ENCODE measurements at regions of chr21 and their contacts with region 1.

Region 1: GRCh38 chr21:41612674-41613532 is 104.9 kb upstream of the TMPRSS2 start:
- DNase-seq: peak; percentile 41
- H3K4me3 ChIP-seq: no peak overlapping the region
- H3K27ac ChIP-seq: no peak overlapping the region
- H3K4me1 ChIP-seq: peaks cover 8% of the 10 kb centered on the region
- CTCF ChIP-seq: peak; percentile 77

Region 2: DNA sequence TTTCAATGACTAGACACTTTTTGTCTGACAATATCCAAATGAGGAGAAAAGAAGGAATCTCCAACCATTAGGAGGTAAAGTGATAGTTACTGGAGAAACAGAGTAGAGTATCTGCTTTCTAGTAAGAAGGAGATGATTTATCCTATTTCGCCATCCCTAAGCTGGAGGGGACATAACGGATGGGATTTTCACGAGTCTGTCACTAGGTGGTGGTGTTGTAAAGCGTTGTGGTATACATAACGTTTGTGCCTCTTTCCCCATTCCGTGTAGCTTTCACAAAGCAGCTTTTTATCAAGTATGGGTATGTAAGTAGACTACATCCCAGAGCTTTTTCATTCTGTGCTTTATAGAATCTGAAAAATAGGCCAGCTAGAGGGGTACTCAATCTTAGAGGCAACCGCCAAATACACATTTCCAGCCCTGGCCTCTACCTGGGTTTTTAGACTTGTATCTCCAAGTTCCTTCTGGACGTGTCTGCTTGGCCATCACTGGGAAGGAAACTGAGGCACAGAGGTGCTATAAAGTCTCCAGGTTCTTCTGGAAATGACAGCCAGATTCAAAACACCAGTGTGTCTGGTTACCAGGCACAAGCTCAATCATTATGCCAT is 329.6 kb before region 1 on chr21:
- CTCF ChIA-PET with region 1: interaction called, 4 read pairs
- POLR2A ChIA-PET with region 1: no interaction called
- intact Hi-C with region 1: loop called (anchors 1 kb)
- DNase-seq: peak; percentile 85
- H3K4me3 ChIP-seq: no peak overlapping the region
- H3K27ac ChIP-seq: no peak overlapping the region
- H3K4me1 ChIP-seq: peaks cover 8% of the 10 kb centered on the region
- CTCF ChIP-seq: peak; percentile 90

Region 3: DNA sequence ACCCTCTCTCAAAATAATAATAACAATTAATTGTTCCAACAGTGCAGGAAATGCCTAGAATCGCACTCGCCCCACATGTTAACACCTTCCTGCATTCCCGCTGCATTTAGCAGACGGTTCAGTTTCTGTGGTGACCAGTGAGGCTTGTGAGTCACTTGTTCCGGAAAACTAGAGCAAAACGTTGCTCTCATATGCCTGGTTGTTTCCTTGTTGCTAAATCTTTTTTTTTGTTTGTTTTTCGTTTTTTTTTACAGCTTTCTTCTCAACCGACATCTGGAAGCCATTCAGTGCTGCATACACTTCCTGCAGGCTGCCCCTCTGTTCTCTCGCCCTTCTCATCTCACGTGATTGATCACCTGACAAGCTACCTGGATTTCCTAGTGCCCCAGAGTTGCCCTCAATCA is 48.0 kb before region 1 on chr21:
- CTCF ChIA-PET with region 1: no interaction called
- POLR2A ChIA-PET with region 1: no interaction called
- intact Hi-C with region 1: no loop called
- DNase-seq: no peak
- H3K4me3 ChIP-seq: no peak overlapping the region
- H3K27ac ChIP-seq: no peak overlapping the region
- H3K4me1 ChIP-seq: no peaks in the 10 kb centered on the region
- CTCF ChIP-seq: no peak

Region 4: GRCh38 chr21:41777951-41778874 is 165.3 kb after region 1 on chr21:
- CTCF ChIA-PET with region 1: no interaction called
- POLR2A ChIA-PET with region 1: no interaction called
- intact Hi-C with region 1: loop called (anchors 1 kb)
- DNase-seq: peak; percentile 28
- H3K4me3 ChIP-seq: no peak overlapping the region
- H3K27ac ChIP-seq: no peak overlapping the region
- H3K4me1 ChIP-seq: no peaks in the 10 kb centered on the region
- CTCF ChIP-seq: peak; percentile 71

Region 5: GRCh38 chr21:41816220-41817165 is 203.6 kb after region 1 on chr21:
- CTCF ChIA-PET with region 1: no interaction called
- POLR2A ChIA-PET with region 1: no interaction called
- intact Hi-C with region 1: loop called (anchors 1 kb)
- DNase-seq: peak; percentile 82
- H3K4me3 ChIP-seq: no peak overlapping the region
- H3K27ac ChIP-seq: peak overlapping the region; percentile 38
- H3K4me1 ChIP-seq: peaks cover 11% of the 10 kb centered on the region
- CTCF ChIP-seq: peak; percentile 86

Region 6: DNA sequence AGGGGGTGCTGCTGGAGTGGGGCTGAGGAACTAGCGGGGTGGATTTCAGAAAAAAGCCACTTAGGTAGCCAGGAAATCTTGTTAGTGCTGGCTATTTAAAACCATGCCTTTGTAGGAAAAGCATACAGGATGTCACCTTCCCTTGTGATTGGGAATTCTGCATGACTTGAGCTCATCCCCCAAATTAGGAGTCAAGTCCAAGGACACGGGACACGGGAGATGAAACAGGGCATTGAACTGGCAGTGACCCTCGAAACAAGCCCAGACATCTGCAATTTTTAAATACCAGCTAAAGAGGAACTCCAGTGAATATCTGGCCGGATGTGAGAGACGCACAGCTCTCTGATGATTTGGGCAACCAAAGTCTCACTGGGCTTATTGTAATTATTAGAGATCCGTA is 308.1 kb after region 1 on chr21:
- CTCF ChIA-PET with region 1: no interaction called
- POLR2A ChIA-PET with region 1: interaction called, 3 read pairs
- intact Hi-C with region 1: loop called (anchors 1 kb)
- DNase-seq: peak; percentile 77
- H3K4me3 ChIP-seq: no peak overlapping the region
- H3K27ac ChIP-seq: peak overlapping the region; percentile 74
- H3K4me1 ChIP-seq: peaks cover 54% of the 10 kb centered on the region
- CTCF ChIP-seq: no peak

Region 7: GRCh38 chr21:41966041-41966684 is 353.3 kb after region 1 on chr21:
- CTCF ChIA-PET with region 1: interaction called, 4 read pairs
- POLR2A ChIA-PET with region 1: no interaction called
- intact Hi-C with region 1: loop called (anchors 10 kb)
- DNase-seq: no peak
- H3K4me3 ChIP-seq: no peak overlapping the region
- H3K27ac ChIP-seq: no peak overlapping the region
- H3K4me1 ChIP-seq: peaks cover 27% of the 10 kb centered on the region
- CTCF ChIP-seq: no peak

Region 8: GRCh38 chr21:42117229-42117966 is 504.5 kb after region 1 on chr21:
- CTCF ChIA-PET with region 1: no interaction called
- POLR2A ChIA-PET with region 1: no interaction called
- intact Hi-C with region 1: loop called (anchors 5 kb)
- DNase-seq: peak; percentile 84
- H3K4me3 ChIP-seq: peak overlapping the region; percentile 10
- H3K27ac ChIP-seq: peak overlapping the region; percentile 93
- H3K4me1 ChIP-seq: peaks cover 70% of the 10 kb centered on the region
- CTCF ChIP-seq: peak; percentile 99